H1 (cell line): ENCODE measurements at regions of chr1 and their contacts with region 1.

Region 1: GRCh38 chr1:18743233-18743632 is 112.6 kb downstream of the PAX7 start:
- DNase-seq: peak in 1 of 2 experiments; percentile 75
- H3K4me3 ChIP-seq: no peak overlapping the region
- H3K27ac ChIP-seq: no peak overlapping the region
- H3K4me1 ChIP-seq: no peaks in the 10 kb centered on the region
- H3K27me3 ChIP-seq: peaks cover 0 to 5% (median 1%) of the 10 kb centered on the region in 4 experiments; a peak in 5 of 7 replicates
- CTCF ChIP-seq: peak; percentile 82 to 94 (median 85)
- EP300 ChIP-seq: no peak
- POLR2A ChIP-seq: no peak
- RAD21 ChIP-seq: peak; percentile 82 to 86

Region 2: DNA sequence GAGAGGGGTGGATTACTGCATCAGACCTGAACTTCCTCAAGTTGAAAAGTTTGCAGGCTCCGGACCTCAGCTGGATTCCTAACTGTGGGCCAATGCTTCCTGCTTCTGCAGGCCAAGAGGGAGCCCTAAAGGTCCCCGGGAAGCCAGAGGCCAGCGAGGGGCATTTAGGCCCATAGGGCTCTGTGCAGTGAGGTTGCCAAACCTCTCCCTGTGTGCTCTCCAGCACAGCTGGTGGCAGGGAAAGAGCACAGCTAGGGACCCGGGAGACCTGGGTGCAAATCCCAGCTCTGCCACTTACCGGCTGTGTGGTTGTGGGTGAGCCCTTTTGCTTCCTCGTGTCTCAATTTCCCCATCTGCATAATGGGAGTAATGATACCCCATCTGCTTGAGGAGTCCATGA is 12.1 kb before region 1 on chr1:
- CTCF ChIA-PET with region 1: interaction called, 15 read pairs
- POLR2A ChIA-PET with region 1: interaction called, 3 read pairs
- DNase-seq: no peak
- H3K4me3 ChIP-seq: no peak overlapping the region
- H3K27ac ChIP-seq: no peak overlapping the region
- H3K4me1 ChIP-seq: no peaks in the 10 kb centered on the region; a peak in 1 of 7 replicates
- H3K27me3 ChIP-seq: peaks cover 0 to 4% (median 0%) of the 10 kb centered on the region in 4 experiments; a peak in 1 of 7 replicates
- CTCF ChIP-seq: no peak
- EP300 ChIP-seq: no peak
- POLR2A ChIP-seq: no peak
- RAD21 ChIP-seq: no peak

Region 3: GRCh38 chr1:18764362-18764761 is 21.1 kb after region 1 on chr1:
- CTCF ChIA-PET with region 1: interaction called, 19 read pairs
- POLR2A ChIA-PET with region 1: no interaction called
- DNase-seq: no peak
- H3K4me3 ChIP-seq: no peak overlapping the region
- H3K27ac ChIP-seq: no peak overlapping the region
- H3K4me1 ChIP-seq: no peaks in the 10 kb centered on the region
- H3K27me3 ChIP-seq: peaks cover 0 to 2% (median 0%) of the 10 kb centered on the region in 4 experiments; a peak in 2 of 7 replicates
- CTCF ChIP-seq: no peak
- EP300 ChIP-seq: no peak
- POLR2A ChIP-seq: no peak
- RAD21 ChIP-seq: no peak